Aorta (tissue), 5 donors: ENCODE measurements at regions of chr15 and their contacts with region 1.

Region 1: GRCh38 chr15:90099868-90100831 is 2.1 kb downstream of the IDH2 start:
- DNase-seq: peak; percentile 71 to 86
- ATAC-seq: no peak
- H3K4me3 ChIP-seq: no peak overlapping the region
- H3K27ac ChIP-seq: peak overlapping the region in 1 of 2 donors; percentile 77
- H3K4me1 ChIP-seq: no peaks in the 10 kb centered on the region
- H3K27me3 ChIP-seq: no peaks in the 10 kb centered on the region

Region 2: GRCh38 chr15:90031231-90031791 is 68.8 kb before region 1 on chr15:
- intact Hi-C with region 1: loop called in 1 of 2 experiments (anchors 10 kb)
- DNase-seq: no peak
- ATAC-seq: no peak
- H3K4me3 ChIP-seq: no peak overlapping the region
- H3K27ac ChIP-seq: no peak overlapping the region
- H3K4me1 ChIP-seq: no peaks in the 10 kb centered on the region
- H3K27me3 ChIP-seq: no peaks in the 10 kb centered on the region